ENCODE measurements at regions of chrX and their contacts with region 1.

Region 1: GRCh38 chrX:74015379-74016019 is 288.5 kb upstream of the ZCCHC13 start:
- DNase-seq: peak; percentile 59
- H3K4me3 ChIP-seq: no peak overlapping the region
- H3K27ac ChIP-seq: no peak overlapping the region
- H3K4me1 ChIP-seq: no peaks in the 10 kb centered on the region
- H3K27me3 ChIP-seq: no peaks in the 10 kb centered on the region
- CTCF ChIP-seq: peak; percentile 86 to 88

Region 2: GRCh38 chrX:73850124-73851013 is 165.1 kb before region 1 on chrX:
- CTCF ChIA-PET with region 1: no interaction called
- dilution Hi-C with region 1: no loop called
- in situ Hi-C with region 1: loop called (anchors 5 kb)
- intact Hi-C with region 1: loop called (anchors 1 kb)
- DNase-seq: peak; percentile 35
- H3K4me3 ChIP-seq: peak overlapping the region; percentile 45 to 58 (median 49)
- H3K27ac ChIP-seq: no peak overlapping the region
- H3K4me1 ChIP-seq: no peaks in the 10 kb centered on the region
- H3K27me3 ChIP-seq: no peaks in the 10 kb centered on the region
- CTCF ChIP-seq: peak in 1 of 2 donors; percentile 51

Region 3: GRCh38 chrX:73863268-73863667 is 152.2 kb before region 1 on chrX:
- CTCF ChIA-PET with region 1: no interaction called
- dilution Hi-C with region 1: loop called (anchors 10 kb)
- in situ Hi-C with region 1: loop called in 1 of 2 experiments (anchors 5 kb)
- intact Hi-C with region 1: no loop called
- DNase-seq: no peak
- H3K4me3 ChIP-seq: no peak overlapping the region
- H3K27ac ChIP-seq: no peak overlapping the region
- H3K4me1 ChIP-seq: no peaks in the 10 kb centered on the region
- H3K27me3 ChIP-seq: peaks cover 2% of the 10 kb centered on the region
- CTCF ChIP-seq: no peak

Region 4: DNA sequence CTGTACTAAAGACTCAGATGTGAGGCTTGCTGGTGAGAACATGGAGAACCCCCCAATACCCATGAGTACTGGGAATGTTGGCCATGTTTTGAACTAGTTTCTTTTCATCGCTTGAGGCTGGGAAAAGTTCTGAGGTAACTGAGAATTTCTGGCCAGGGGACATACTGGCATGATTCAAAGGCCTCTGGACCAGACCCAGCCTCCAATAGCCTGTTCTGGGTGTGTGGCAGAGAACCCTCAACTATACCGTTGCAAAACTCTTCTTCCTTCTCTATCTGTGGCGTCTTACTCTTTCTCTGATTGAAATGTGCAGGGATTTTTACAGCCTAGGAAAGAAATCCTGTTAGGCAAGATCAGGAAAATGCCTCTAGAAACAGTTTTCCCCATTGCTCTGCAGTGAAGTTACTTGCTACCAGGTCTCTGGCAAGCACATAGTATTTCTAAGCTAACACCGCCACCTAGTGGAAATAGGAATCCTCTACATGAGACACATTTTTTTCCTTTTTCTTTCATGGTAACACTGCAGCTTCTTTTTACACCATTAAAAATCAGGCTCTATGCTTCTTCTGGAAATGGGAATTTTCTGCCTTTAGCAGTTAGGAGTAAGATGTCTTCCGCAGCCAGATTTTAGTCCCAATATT is 117.8 kb after region 1 on chrX:
- CTCF ChIA-PET with region 1: no interaction called
- dilution Hi-C with region 1: no loop called
- in situ Hi-C with region 1: loop called in 1 of 2 experiments (anchors 25 kb)
- intact Hi-C with region 1: loop called (anchors 1 kb)
- DNase-seq: peak; percentile 40
- H3K4me3 ChIP-seq: no peak overlapping the region
- H3K27ac ChIP-seq: no peak overlapping the region
- H3K4me1 ChIP-seq: no peaks in the 10 kb centered on the region
- H3K27me3 ChIP-seq: no peaks in the 10 kb centered on the region
- CTCF ChIP-seq: peak; percentile 68 to 74

Region 5: DNA sequence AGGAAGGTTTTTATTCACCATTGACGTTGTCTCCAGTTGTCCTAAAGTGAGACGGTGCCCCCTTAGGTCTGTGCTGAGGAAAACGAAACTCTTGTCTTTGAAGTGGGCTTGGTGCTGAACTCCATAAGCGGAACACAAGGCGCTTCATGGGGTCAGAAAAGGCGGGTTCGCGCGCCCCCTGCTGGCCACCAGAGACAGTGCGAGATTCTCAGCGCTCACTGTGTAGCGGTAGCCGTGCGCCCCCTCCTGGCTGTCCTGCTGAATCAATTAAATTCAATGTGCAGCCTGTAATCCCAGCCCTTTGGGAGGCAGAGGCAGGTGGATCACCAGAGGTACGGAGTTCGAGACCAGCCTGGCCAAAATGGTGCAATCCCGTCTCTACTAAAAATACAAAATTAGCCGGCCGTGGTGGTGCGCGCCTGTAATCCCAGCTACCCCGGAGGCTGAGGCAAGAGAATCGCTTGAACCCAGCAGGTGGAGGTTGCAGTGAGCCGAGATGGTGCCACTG is 534.9 kb after region 1 on chrX:
- CTCF ChIA-PET with region 1: no interaction called
- dilution Hi-C with region 1: no loop called
- in situ Hi-C with region 1: no loop called
- intact Hi-C with region 1: loop called (anchors 5 kb)
- DNase-seq: peak; percentile 53
- H3K4me3 ChIP-seq: no peak overlapping the region
- H3K27ac ChIP-seq: no peak overlapping the region
- H3K4me1 ChIP-seq: no peaks in the 10 kb centered on the region
- H3K27me3 ChIP-seq: no peaks in the 10 kb centered on the region
- CTCF ChIP-seq: peak; percentile 96

Measured in mammary epithelial cell (primary cell).